Caco-2 (cell line): ENCODE measurements at regions of chrX and their contacts with region 1.

Region 1: DNA sequence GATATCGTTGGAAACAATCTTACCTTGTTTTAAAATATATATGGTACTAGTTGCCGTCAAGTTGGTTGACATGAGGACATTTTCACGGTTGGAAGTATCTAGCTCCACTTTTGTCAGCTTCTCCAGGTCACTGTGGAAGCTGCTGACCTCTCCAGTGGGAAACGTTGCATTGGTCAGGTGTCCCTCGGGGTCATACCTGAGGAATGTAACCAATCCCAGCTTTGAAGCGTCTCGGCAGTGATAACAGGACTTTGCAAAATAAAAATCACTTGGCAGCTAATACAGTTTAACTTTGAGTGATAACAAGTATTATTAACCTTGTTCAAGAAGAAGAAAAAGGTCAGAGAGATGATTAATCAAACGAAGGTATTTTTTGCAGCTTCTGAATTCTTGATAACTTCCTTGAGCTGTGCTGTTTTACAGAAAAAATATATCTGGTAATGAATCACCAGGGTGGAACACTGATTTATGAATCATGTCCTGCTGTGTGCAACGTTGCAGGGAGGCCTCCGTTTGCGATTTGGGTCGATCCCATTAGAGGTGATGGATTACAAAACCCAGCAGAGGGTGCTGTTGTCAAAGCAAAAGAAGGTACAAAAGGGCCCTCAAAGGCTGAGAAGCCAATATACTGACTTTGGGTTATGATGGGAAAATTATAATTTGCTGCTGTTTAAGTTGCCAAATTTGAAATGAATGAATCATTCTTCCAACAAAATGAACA is 60.1 kb downstream of the SH2D1A start:
- DNase-seq: peak; percentile 45 to 56
- H3K4me3 ChIP-seq: no peak overlapping the region
- H3K4me3 Mint-ChIP-seq: no peak overlapping the region
- H3K27ac Mint-ChIP-seq: no peak overlapping the region
- H3K4me1 ChIP-seq: no peaks in the 10 kb centered on the region
- H3K4me1 Mint-ChIP-seq: no peaks in the 10 kb centered on the region
- H3K27me3 ChIP-seq: no peaks in the 10 kb centered on the region
- H3K27me3 Mint-ChIP-seq: peaks cover 4% of the 10 kb centered on the region
- CTCF ChIP-seq: peak; percentile 44 to 52

Region 2: DNA sequence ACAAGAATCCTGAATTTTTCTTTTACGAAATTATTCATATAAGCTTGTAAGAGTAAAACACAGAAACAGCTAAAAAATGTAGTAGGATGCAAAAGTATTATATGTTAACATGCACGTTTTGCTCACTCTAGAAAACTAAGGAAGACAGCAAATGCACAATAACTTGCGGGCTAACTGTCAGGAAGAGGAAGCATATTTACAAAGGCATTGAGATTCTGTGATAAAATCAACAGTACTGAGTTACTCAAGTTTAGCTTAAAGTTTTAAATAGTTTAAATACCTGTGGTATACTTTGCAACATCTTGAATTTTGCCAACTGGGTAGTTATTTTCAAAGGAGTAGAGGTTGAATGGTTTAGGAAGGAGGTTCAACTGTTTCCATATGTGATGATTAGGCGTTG is 23.1 kb before region 1 on chrX:
- CTCF ChIA-PET with region 1: no interaction called
- POLR2A ChIA-PET with region 1: no interaction called
- intact Hi-C with region 1: no loop called
- DNase-seq: no peak
- H3K4me3 ChIP-seq: no peak overlapping the region
- H3K4me3 Mint-ChIP-seq: no peak overlapping the region
- H3K27ac Mint-ChIP-seq: no peak overlapping the region
- H3K4me1 ChIP-seq: no peaks in the 10 kb centered on the region
- H3K4me1 Mint-ChIP-seq: no peaks in the 10 kb centered on the region
- H3K27me3 ChIP-seq: no peaks in the 10 kb centered on the region
- H3K27me3 Mint-ChIP-seq: peaks cover 4% of the 10 kb centered on the region
- CTCF ChIP-seq: no peak

Region 3: GRCh38 chrX:124435616-124436015 is 29.2 kb after region 1 on chrX:
- CTCF ChIA-PET with region 1: no interaction called
- POLR2A ChIA-PET with region 1: no interaction called
- intact Hi-C with region 1: no loop called
- DNase-seq: no peak
- H3K4me3 ChIP-seq: no peak overlapping the region
- H3K4me3 Mint-ChIP-seq: no peak overlapping the region
- H3K27ac Mint-ChIP-seq: no peak overlapping the region
- H3K4me1 ChIP-seq: no peaks in the 10 kb centered on the region
- H3K4me1 Mint-ChIP-seq: no peaks in the 10 kb centered on the region
- H3K27me3 ChIP-seq: no peaks in the 10 kb centered on the region
- H3K27me3 Mint-ChIP-seq: no peaks in the 10 kb centered on the region
- CTCF ChIP-seq: no peak

Region 4: DNA sequence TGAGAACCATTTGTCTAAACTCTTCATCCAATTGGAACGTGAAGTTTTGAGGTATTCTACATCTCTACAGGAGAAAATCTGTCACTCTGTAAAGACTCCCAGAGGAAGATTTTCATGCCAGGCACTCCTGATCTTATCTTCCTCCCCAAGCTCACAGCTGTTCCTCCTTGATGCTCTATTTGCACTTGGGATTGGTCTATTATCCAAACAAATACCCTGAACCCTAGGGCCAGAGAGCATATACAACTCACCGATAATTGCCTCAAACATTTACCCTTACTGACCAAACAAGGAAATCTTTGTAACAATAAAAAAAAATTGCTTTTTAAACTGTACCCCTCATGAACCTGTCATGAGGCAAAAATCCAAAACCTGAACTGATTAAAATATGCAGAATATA is 312.6 kb after region 1 on chrX:
- CTCF ChIA-PET with region 1: no interaction called
- POLR2A ChIA-PET with region 1: no interaction called
- intact Hi-C with region 1: loop called (anchors 2 kb)
- DNase-seq: peak in 1 of 2 experiments; percentile 40
- H3K4me3 ChIP-seq: no peak overlapping the region
- H3K4me3 Mint-ChIP-seq: no peak overlapping the region
- H3K27ac Mint-ChIP-seq: no peak overlapping the region
- H3K4me1 ChIP-seq: no peaks in the 10 kb centered on the region; the same call in 1 of the 2 replicates
- H3K4me1 Mint-ChIP-seq: no peaks in the 10 kb centered on the region
- H3K27me3 ChIP-seq: no peaks in the 10 kb centered on the region
- H3K27me3 Mint-ChIP-seq: no peaks in the 10 kb centered on the region
- CTCF ChIP-seq: no peak

Region 5: GRCh38 chrX:124863303-124863702 is 456.8 kb after region 1 on chrX:
- CTCF ChIA-PET with region 1: no interaction called
- POLR2A ChIA-PET with region 1: no interaction called
- intact Hi-C with region 1: loop called (anchors 5 kb)
- DNase-seq: no peak
- H3K4me3 ChIP-seq: no peak overlapping the region
- H3K4me3 Mint-ChIP-seq: no peak overlapping the region
- H3K27ac Mint-ChIP-seq: no peak overlapping the region
- H3K4me1 ChIP-seq: no peaks in the 10 kb centered on the region
- H3K4me1 Mint-ChIP-seq: no peaks in the 10 kb centered on the region
- H3K27me3 ChIP-seq: no peaks in the 10 kb centered on the region
- H3K27me3 Mint-ChIP-seq: peaks cover 5% of the 10 kb centered on the region
- CTCF ChIP-seq: peak in 1 of 2 experiments; percentile 13